Transverse colon (tissue), 4 donors: ENCODE measurements at regions of chr15 and their contacts with region 1.

Region 1: DNA sequence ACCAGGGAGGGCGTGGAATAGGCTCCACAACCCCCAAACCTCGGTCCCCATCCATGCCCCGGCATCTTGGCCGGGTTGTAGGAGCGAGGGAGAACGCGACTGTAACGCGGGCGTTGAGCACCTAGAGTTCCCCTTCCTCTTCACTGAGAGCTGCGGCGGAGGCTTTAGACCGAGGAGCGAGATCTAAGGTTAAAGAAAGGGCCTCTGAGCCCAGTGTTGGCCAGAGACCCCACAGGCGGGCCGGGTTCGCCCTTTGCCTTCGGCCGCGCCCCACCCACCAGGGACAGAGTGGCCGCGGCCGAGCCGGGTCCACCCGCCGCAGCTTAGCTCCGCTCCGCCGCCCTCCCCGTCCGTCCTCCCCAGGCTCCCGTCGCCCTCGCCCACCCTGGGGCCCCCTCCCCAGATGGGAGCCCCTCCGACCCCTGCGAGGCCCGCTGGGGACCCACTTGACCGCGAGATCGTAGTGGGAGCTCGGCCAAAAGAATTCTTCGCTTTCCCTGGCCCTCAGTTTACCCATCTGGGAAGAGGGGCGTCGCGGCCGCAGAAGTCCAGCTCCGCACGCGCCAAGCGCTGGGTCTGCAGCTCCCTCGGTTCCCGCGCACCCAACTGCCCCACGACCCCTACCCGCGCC is 425 bp downstream of the ANPEP start:
- DNase-seq: no peak
- H3K4me3 ChIP-seq: peak overlapping the region; percentile 6 to 48 (median 41)
- H3K27ac ChIP-seq: peak overlapping the region; percentile 18 to 38 (median 30)
- H3K4me1 ChIP-seq: peaks cover 5 to 29% (median 25%) of the 10 kb centered on the region in 4 donors
- H3K27me3 ChIP-seq: peaks cover 38% of the 10 kb centered on the region
- CTCF ChIP-seq: no peak
- EP300 ChIP-seq: no peak
- POLR2A ChIP-seq: no peak

Region 2: DNA sequence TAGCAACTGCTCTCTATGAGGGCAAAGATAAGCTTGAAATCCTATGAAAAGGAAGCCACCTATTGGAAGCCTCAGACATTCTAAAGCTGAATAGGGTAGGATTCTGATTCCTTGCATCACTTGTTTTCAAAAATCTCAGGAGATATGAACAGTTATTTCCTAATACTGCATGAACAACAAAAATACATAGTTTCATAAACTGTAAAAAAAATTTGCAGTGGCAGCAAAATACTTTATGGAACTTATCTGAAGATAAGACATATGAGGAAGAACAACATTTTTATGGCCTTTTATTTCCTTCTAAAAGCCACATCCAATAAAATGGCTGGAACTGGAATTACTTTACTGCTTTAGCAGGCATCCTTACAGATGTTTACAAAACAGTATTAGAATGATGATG is 49.7 kb after region 1 on chr15:
- in situ Hi-C with region 1: no loop called
- intact Hi-C with region 1: no loop called
- DNase-seq: no peak
- H3K4me3 ChIP-seq: no peak overlapping the region
- H3K27ac ChIP-seq: peak overlapping the region; percentile 43 to 67 (median 64)
- H3K4me1 ChIP-seq: peaks cover 4 to 62% (median 41%) of the 10 kb centered on the region in 4 donors
- H3K27me3 ChIP-seq: no peaks in the 10 kb centered on the region
- CTCF ChIP-seq: no peak
- EP300 ChIP-seq: no peak
- POLR2A ChIP-seq: no peak

Region 3: GRCh38 chr15:89888214-89888804 is 74.1 kb after region 1 on chr15:
- in situ Hi-C with region 1: no loop called
- intact Hi-C with region 1: loop called (anchors 2 kb)
- DNase-seq: peak; percentile 41
- H3K4me3 ChIP-seq: no peak overlapping the region
- H3K27ac ChIP-seq: peak overlapping the region in 1 of 4 donors; percentile 14
- H3K4me1 ChIP-seq: peaks cover 7 to 26% (median 13%) of the 10 kb centered on the region in 4 donors
- H3K27me3 ChIP-seq: no peaks in the 10 kb centered on the region
- CTCF ChIP-seq: peak in 4 of 5 experiments; percentile 33 to 50 (median 48)
- EP300 ChIP-seq: no peak
- POLR2A ChIP-seq: no peak